H1 (cell line): ENCODE measurements at regions of chr2 and their contacts with region 1.

Region 1: GRCh38 chr2:241570961-241571581 is 12.5 kb downstream of the BOK start:
- DNase-seq: no peak
- H3K4me3 ChIP-seq: no peak overlapping the region
- H3K27ac ChIP-seq: no peak overlapping the region
- H3K4me1 ChIP-seq: peaks cover 0 to 16% (median 2%) of the 10 kb centered on the region in 4 experiments; a peak in 3 of 7 replicates
- H3K27me3 ChIP-seq: peaks cover 0 to 2% (median 0%) of the 10 kb centered on the region in 4 experiments; a peak in 3 of 7 replicates
- CTCF ChIP-seq: no peak
- EP300 ChIP-seq: no peak
- POLR2A ChIP-seq: no peak
- RAD21 ChIP-seq: no peak

Region 2: GRCh38 chr2:241558532-241559322 is 12.3 kb before region 1 on chr2 and contains the start of gene BOK:
- CTCF ChIA-PET with region 1: no interaction called
- POLR2A ChIA-PET with region 1: interaction called, 22 read pairs
- DNase-seq: peak; percentile 63 to 88
- H3K4me3 ChIP-seq: peak within 1 kb of the TSS; percentile 54 to 83 (median 64)
- H3K27ac ChIP-seq: no peak within 1 kb of the TSS
- H3K4me1 ChIP-seq: peaks cover 0 to 8% (median 3%) of the 10 kb centered on the region in 4 experiments; a peak in 4 of 7 replicates
- H3K27me3 ChIP-seq: peaks cover 0 to 2% (median 0%) of the 10 kb centered on the region in 4 experiments; a peak in 2 of 7 replicates
- CTCF ChIP-seq: no peak
- EP300 ChIP-seq: no peak
- POLR2A ChIP-seq: peak in 1 of 2 experiments; percentile 49; a peak in 1 of 3 replicates
- RAD21 ChIP-seq: no peak
- total RNA-seq, gene BOK: 33.7 and 34.7 TPM in 2 replicates

Region 3: DNA sequence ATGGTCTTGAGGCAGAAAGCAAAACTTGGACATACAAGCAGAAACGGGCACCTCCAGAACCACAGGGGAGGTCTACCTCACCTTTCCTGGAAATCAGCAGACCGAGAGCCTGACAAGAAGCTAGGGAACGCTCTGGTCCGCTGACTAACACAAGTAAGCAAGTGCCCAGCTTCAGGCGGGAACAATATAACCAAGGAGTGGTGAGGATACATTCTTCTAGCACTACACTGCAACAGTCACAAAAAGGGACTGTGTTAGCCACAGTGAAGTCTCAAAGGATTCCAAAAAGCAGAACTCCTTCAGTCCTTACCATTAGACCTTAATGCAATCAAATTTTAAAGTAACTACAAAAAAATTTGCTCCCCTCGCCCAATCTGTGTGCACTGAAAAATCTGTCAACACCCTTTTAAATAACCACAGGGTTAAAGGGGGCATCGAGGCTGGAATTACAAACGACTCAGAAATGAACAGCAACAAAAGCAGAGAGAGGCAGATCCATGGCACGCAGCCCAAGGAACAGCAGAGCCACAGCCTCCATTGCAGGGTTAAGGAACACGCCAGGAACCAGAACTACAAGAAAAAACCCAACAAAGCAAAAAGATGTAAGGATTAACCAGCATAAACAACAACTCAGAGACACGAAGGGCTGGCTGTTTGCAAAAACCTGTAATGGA is 58.8 kb after region 1 on chr2:
- CTCF ChIA-PET with region 1: no interaction called
- POLR2A ChIA-PET with region 1: no interaction called
- DNase-seq: no peak
- H3K4me3 ChIP-seq: no peak overlapping the region
- H3K27ac ChIP-seq: no peak overlapping the region
- H3K4me1 ChIP-seq: no peaks in the 10 kb centered on the region
- H3K27me3 ChIP-seq: no peaks in the 10 kb centered on the region
- CTCF ChIP-seq: no peak
- EP300 ChIP-seq: no peak
- POLR2A ChIP-seq: no peak
- RAD21 ChIP-seq: no peak